Lower lobe of right lung (tissue), 2 donors: ENCODE measurements at regions of chr7 and their contacts with region 1.

Region 1: DNA sequence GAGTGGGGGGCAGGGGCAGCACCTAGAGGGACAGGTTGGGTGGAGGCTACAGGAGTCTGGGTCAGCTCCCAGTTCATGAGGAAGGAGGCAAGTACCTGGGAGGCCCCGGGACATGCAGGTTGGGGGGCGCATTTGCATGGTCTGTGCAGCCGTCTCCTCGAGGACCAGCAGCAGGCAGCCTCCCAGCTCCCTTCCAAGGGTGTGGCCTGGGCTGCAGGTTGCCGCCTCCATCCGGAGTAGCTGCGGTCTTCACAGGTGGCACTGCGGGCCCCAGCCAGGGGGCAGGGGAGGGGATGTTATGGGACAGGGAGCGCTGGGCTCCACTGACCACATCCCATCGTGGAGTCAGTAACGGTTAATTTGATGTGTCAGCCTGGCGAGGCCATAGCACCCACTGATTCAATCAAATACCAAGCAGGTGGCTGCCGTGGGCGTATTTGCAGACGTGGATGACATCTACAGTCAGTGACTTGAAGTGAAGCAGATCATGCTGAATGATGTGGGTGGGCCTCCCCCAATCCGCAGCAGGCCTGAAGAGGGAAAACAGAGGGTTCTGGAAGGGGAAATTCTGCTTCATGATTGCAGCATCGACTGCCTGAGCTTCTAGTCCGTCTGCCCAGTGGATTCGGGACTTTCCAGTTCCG is 81.6 kb downstream of the PRKAG2 start:
- DNase-seq: no peak
- ATAC-seq: no peak
- H3K4me3 ChIP-seq: no peak overlapping the region
- H3K27ac ChIP-seq: peak overlapping the region; percentile 80
- H3K4me1 ChIP-seq: peaks cover 64% of the 10 kb centered on the region
- H3K27me3 ChIP-seq: no peaks in the 10 kb centered on the region
- CTCF ChIP-seq: no peak

Region 2: DNA sequence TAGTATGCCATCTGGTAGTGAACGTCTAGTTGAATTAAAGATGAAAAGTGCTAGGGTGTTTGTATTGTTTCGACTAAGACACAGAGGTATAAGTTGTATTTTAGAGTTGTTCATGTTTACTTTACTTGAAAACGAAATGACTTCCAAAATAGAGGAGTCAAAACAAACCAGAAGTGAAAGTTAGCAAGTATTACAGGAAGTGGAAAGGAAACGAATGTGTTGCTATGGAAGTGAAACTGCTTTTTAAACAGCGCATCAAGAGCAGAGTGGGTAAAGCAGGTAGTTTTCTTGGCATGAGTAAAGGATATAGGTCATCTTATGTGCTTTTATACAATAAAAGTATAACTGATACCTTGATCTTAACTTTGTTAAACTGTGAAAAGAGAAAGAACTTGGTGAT is 140.9 kb after region 1 on chr7:
- intact Hi-C with region 1: loop called (anchors 10 kb)
- DNase-seq: no peak
- ATAC-seq: peak; percentile 29 to 49
- H3K4me3 ChIP-seq: no peak overlapping the region
- H3K27ac ChIP-seq: peak overlapping the region; percentile 37
- H3K4me1 ChIP-seq: peaks cover 12% of the 10 kb centered on the region
- H3K27me3 ChIP-seq: no peaks in the 10 kb centered on the region
- CTCF ChIP-seq: no peak